ENCODE measurements at regions of chr5 and their contacts with region 1.

Region 1: DNA sequence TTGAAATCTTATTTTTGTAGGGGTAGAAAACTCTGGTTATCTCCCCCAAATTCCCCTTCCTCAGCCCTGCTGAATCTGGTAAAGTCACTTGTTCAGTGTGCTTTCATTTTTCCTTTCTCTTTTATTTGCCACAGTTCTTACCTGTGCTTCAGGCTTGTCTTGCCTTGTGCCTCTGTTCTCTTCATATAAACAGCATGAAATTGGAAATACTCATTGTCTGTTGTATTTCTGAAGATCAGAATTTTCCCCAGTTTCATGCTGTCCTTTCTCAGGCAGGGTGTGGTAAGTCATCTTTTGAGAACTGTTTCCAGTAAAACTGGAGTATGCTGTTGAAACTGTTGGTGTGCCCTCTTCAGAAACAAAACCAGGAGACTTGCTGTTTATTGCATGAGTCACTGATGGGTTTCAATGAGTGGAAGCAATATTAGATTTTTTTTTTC is 7.0 kb downstream of the PAM start:
- DNase-seq: no peak
- H3K4me3 ChIP-seq: peak overlapping the region in 2 of 8 donors; percentile 15 to 16
- H3K27ac ChIP-seq: peak overlapping the region in 6 of 8 donors; percentile 2 to 55 (median 18)
- H3K4me1 ChIP-seq: peaks cover 13 to 90% (median 51%) of the 10 kb centered on the region in 6 donors
- H3K27me3 ChIP-seq: no peaks in the 10 kb centered on the region
- CTCF ChIP-seq: no peak
- POLR2A ChIP-seq: no peak

Region 2: GRCh38 chr5:102570748-102571147 is 191.4 kb before region 1 on chr5:
- intact Hi-C with region 1: no loop called
- DNase-seq: no peak
- H3K4me3 ChIP-seq: no peak overlapping the region
- H3K27ac ChIP-seq: no peak overlapping the region
- H3K4me1 ChIP-seq: no peaks in the 10 kb centered on the region
- H3K27me3 ChIP-seq: peaks cover 0 to 3% (median 0%) of the 10 kb centered on the region in 7 donors
- CTCF ChIP-seq: no peak
- POLR2A ChIP-seq: no peak

Region 3: GRCh38 chr5:103119765-103120606 is 357.9 kb after region 1 on chr5 and contains the starts of genes GIN1 and PPIP5K2:
- intact Hi-C with region 1: loop called (anchors 10 kb)
- DNase-seq: peak; percentile 98
- H3K4me3 ChIP-seq: peak within 1 kb of the TSS; percentile 76 to 86 (median 82)
- H3K27ac ChIP-seq: peak within 1 kb of the TSS; percentile 89 to 98 (median 96)
- H3K4me1 ChIP-seq: peaks cover 18 to 69% (median 40%) of the 10 kb centered on the region in 6 donors
- H3K27me3 ChIP-seq: no peaks in the 10 kb centered on the region
- CTCF ChIP-seq: peak in 6 of 11 experiments; percentile 12 to 45 (median 32)
- POLR2A ChIP-seq: peak in 2 of 3 donors; percentile 77 to 88
- total RNA-seq, gene GIN1: 6.8 to 13.2 (median 8.7) TPM
- total RNA-seq, gene PPIP5K2: 53.3 to 79.8 (median 68.5) TPM

Region 4: GRCh38 chr5:103271570-103272289 is 509.6 kb after region 1 on chr5:
- intact Hi-C with region 1: no loop called
- DNase-seq: no peak
- H3K4me3 ChIP-seq: peak overlapping the region in 3 of 8 donors; percentile 4 to 35 (median 16)
- H3K27ac ChIP-seq: peak overlapping the region in 1 of 8 donors; percentile 42
- H3K4me1 ChIP-seq: peaks cover 0 to 34% (median 15%) of the 10 kb centered on the region in 6 donors
- H3K27me3 ChIP-seq: no peaks in the 10 kb centered on the region
- CTCF ChIP-seq: no peak
- POLR2A ChIP-seq: no peak